ENCODE measurements at regions of chr1 and their contacts with region 1.

Region 1: GRCh38 chr1:174159252-174160108 is at the start of gene RABGAP1L:
- DNase-seq: peak; percentile 94
- H3K4me3 Mint-ChIP-seq: peak within 1 kb of the TSS; percentile 83
- H3K27ac Mint-ChIP-seq: peak within 1 kb of the TSS; percentile 93
- H3K4me1 Mint-ChIP-seq: peaks cover 56% of the 10 kb centered on the region
- H3K27me3 Mint-ChIP-seq: no peaks in the 10 kb centered on the region
- total RNA-seq, gene RABGAP1L: 16.6 TPM

Region 2: GRCh38 chr1:172895050-172895460 is 1264.4 kb before region 1 on chr1:
- CTCF ChIA-PET with region 1: interaction called, 3 read pairs
- intact Hi-C with region 1: loop called (anchors 10 kb)
- DNase-seq: peak; percentile 40
- H3K4me3 Mint-ChIP-seq: no peak overlapping the region
- H3K27ac Mint-ChIP-seq: peak overlapping the region; percentile 9
- H3K4me1 Mint-ChIP-seq: peaks cover 42% of the 10 kb centered on the region
- H3K27me3 Mint-ChIP-seq: peaks cover 4% of the 10 kb centered on the region

Region 3: DNA sequence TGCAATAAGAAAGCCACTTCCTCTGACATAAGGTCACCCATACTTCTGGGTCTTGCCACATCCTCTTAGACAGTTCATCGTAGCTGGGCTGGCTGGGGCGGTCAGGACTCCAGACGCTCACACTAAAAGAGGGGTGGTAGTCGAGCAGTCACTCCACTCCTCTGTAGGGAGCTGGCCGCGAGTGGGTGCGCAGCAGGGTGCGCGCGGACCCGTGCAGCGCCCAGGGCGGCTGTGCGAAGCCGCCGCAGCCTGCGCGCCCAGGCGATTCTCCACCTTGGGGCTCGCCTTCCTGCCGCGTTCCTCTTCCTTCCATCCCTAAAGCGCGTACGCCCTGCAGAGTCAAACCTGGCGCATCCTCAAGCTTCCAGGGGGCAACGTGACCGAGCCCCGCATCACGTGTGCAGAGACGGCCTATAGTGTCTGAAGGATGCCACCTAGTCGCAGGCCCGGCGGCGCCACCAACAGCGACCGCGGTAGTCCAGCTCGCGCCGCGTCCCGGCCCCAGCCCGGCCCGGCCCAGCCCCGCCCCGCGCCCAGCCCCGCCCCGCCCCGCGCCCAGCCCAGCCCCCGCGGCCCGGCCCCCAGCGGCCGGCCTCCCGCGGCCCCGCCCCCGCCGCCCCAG is 682.7 kb before region 1 on chr1:
- CTCF ChIA-PET with region 1: no interaction called
- intact Hi-C with region 1: loop called (anchors 1 kb)
- DNase-seq: peak; percentile 86
- H3K4me3 Mint-ChIP-seq: peak overlapping the region; percentile 91
- H3K27ac Mint-ChIP-seq: peak overlapping the region; percentile 93
- H3K4me1 Mint-ChIP-seq: peaks cover 58% of the 10 kb centered on the region
- H3K27me3 Mint-ChIP-seq: no peaks in the 10 kb centered on the region

Region 4: DNA sequence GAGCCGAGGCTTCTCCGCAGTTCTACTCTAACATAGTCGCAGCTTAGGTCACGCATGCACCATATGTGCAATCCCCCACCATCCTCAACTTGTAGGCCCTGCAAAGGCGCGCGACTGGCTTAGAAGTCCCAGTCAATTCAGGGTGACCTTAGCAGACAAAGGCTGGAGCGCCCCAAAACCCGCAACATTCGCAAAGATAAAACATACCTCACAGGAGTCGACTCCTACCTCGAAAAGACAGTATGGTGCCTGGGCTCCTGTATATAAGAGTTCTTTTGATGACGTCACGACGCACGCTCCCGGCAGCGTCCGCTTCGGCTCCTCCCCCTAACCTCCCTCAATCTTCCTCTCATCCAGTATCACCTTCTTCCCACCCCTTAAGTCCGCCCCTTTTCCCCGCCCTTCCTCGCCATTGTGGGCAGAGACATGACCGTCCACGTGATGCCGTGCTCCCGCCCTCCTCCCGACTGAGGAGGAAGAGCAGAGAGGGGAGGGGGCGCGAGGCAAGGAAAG is 291.7 kb before region 1 on chr1 and contains the start of gene GAS5:
- CTCF ChIA-PET with region 1: no interaction called
- intact Hi-C with region 1: loop called (anchors 1 kb)
- DNase-seq: peak; percentile 100
- H3K4me3 Mint-ChIP-seq: peak within 1 kb of the TSS; percentile 94
- H3K27ac Mint-ChIP-seq: peak within 1 kb of the TSS; percentile 98
- H3K4me1 Mint-ChIP-seq: peaks cover 51% of the 10 kb centered on the region
- H3K27me3 Mint-ChIP-seq: no peaks in the 10 kb centered on the region
- total RNA-seq, gene GAS5: 1,367 to 1,374 TPM

Region 5: GRCh38 chr1:174204697-174205308 is 45.3 kb after region 1 on chr1:
- CTCF ChIA-PET with region 1: interaction called, 5 read pairs
- intact Hi-C with region 1: loop called (anchors 1 kb)
- DNase-seq: peak; percentile 25
- H3K4me3 Mint-ChIP-seq: no peak overlapping the region
- H3K27ac Mint-ChIP-seq: peak overlapping the region; percentile 55
- H3K4me1 Mint-ChIP-seq: peaks cover 48% of the 10 kb centered on the region
- H3K27me3 Mint-ChIP-seq: no peaks in the 10 kb centered on the region

Region 6: GRCh38 chr1:174222166-174222949 is 62.9 kb after region 1 on chr1:
- CTCF ChIA-PET with region 1: no interaction called
- intact Hi-C with region 1: no loop called
- DNase-seq: no peak
- H3K4me3 Mint-ChIP-seq: no peak overlapping the region
- H3K27ac Mint-ChIP-seq: no peak overlapping the region
- H3K4me1 Mint-ChIP-seq: peaks cover 10% of the 10 kb centered on the region
- H3K27me3 Mint-ChIP-seq: no peaks in the 10 kb centered on the region

Region 7: DNA sequence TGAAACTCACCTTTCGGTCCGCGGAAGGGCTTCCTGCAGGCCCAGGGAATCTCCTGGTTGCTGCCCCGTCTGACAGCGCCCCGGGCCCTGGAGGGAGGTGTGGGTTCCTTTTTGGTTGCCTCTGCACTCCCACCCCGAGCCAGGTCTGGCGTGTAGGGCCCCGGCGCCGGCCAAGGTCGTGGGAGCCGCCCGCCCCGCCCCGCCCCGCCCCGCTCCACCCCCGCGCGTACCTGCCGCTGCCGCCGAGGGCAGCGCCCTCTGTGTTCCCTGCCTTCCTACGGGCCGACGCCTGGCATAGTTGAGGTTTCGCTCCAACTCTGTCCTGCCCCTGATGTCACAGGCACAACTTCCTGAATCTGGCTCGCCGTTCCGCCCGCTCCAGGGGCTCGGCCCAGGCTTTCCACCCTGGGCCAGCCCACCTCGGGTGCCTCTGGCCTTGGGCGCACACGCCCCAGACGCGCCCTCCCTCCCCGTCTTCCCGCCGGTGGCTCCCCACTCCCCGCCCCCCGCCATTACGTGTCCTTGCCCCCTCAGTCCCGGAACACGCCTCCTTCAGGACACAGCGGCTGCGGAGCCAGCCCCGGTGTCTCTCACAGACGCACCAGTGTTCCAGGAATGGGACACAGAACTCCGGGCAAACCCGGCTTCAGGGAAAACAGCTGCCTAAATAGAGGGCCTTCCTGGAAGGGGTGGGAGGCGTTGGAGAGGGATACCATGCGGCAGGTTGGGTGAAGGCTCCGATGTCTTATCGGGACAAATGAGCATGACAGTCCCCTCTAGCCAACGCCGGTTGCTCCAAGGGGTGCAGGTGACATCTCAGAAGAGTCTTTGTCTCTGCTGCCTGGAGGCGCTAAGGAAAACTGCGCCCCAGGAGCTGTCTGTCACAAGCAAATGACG is 1033.4 kb after region 1 on chr1 and contains the start of gene KIAA0040:
- CTCF ChIA-PET with region 1: no interaction called
- intact Hi-C with region 1: loop called (anchors 5 kb)
- DNase-seq: peak; percentile 63
- H3K4me3 Mint-ChIP-seq: peak within 1 kb of the TSS; percentile 92
- H3K27ac Mint-ChIP-seq: peak within 1 kb of the TSS; percentile 93
- H3K4me1 Mint-ChIP-seq: peaks cover 45% of the 10 kb centered on the region
- H3K27me3 Mint-ChIP-seq: no peaks in the 10 kb centered on the region
- total RNA-seq, gene KIAA0040: 19.5 to 21.4 TPM